Esophagus muscularis mucosa (tissue), 4 donors: ENCODE measurements at regions of chr22 and their contacts with region 1.

Region 1: GRCh38 chr22:38705235-38706100 is at the start of gene GTPBP1:
- DNase-seq: peak; percentile 100
- H3K4me3 ChIP-seq: peak within 1 kb of the TSS; percentile 82 to 100 (median 87)
- H3K27ac ChIP-seq: peak within 1 kb of the TSS; percentile 97 to 100 (median 98)
- H3K4me1 ChIP-seq: peaks cover 28 to 55% (median 45%) of the 10 kb centered on the region in 4 donors
- H3K27me3 ChIP-seq: no peaks in the 10 kb centered on the region
- CTCF ChIP-seq: peak in 2 of 3 experiments; percentile 12 to 17
- EP300 ChIP-seq: no peak
- POLR2A ChIP-seq: peak; percentile 91
- total RNA-seq, gene GTPBP1: 35.7 to 62.5 (median 50.6) TPM

Region 2: DNA sequence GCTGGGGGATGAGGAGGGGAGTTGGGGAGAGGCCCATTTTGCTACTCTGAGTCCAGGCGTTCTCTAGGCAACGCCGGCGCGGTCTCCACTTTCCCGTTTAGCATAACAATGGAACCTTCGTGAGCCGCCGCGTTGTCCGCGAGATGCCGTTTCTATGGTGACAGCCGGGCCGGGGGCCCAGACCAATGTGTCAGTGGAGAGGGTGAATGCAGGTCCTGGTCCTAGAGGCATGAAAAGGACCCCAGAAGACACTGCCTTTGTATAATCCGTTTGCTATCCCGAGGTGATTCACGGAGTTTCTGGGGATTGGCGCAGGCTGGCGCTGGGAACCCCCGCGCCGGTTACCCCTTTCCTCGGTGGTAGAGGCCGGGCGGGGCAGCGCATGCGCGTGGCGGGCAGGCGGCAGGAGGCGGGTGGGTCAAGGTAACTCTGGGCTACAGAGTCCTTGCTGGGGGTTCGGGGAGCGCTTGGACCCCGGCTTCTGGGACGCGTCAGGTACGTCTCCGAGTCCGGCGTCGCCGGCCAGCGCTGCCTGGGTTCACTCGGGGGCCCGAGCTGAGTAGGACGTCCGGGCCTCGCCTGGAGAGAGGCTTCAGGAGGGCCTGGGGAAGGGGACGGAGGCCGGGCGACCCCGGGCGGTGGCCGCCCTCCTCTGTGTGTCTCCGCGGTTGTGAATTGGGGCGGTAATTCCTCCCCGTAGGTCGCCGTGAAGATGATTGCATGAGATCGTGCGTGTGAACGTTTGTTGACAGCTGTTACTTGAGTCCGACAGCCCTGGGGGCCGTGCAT is 49.0 kb before region 1 on chr22 and contains the starts of genes CBY1 and FAM227A:
- intact Hi-C with region 1: no loop called
- DNase-seq: peak; percentile 97
- H3K4me3 ChIP-seq: peak within 1 kb of the TSS; percentile 83 to 96 (median 88)
- H3K27ac ChIP-seq: peak within 1 kb of the TSS; percentile 85 to 90 (median 89)
- H3K4me1 ChIP-seq: peaks cover 16 to 30% (median 22%) of the 10 kb centered on the region in 4 donors
- H3K27me3 ChIP-seq: no peaks in the 10 kb centered on the region
- CTCF ChIP-seq: no peak
- EP300 ChIP-seq: no peak
- POLR2A ChIP-seq: no peak
- total RNA-seq, gene CBY1: 25.2 to 36.9 (median 33.9) TPM
- total RNA-seq, gene FAM227A: 0.33 to 2.9 (median 0.86) TPM

Region 3: DNA sequence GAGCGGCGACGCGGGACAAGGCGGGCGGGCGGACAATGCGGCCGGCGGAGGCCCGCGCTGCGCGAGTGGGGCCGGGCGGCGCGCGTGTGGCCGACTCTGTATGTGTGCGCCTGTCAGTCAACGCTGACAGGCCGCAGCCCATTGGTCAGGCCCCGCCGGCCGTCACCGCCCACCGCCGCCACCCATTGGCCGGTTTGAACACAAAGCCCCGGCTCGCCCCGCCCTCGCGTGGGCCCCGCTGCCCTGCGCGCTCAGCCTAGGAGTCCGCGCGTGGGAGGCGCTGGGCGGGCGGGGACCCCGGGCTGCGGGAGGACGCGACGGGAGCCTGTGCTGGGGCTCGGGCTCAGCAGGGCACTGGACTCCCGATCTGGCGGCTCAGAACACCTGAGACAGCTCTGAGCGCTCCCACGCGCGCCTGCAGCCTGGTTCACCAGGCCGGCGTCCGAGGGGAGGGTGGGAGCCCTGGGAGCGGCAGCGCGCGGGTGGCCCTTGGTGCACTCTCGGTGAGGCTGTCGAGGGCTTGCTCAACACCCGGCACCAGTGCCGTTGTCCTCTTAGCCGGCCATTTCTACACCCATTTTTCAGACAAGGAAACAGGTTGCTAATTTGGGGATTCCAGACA is 50.6 kb after region 1 on chr22 and contains the start of gene SUN2:
- intact Hi-C with region 1: loop called (anchors 2 kb)
- DNase-seq: peak; percentile 99
- H3K4me3 ChIP-seq: peak within 1 kb of the TSS; percentile 70 to 82 (median 78)
- H3K27ac ChIP-seq: peak within 1 kb of the TSS; percentile 91 to 100 (median 98)
- H3K4me1 ChIP-seq: peaks cover 31 to 58% (median 50%) of the 10 kb centered on the region in 4 donors
- H3K27me3 ChIP-seq: no peaks in the 10 kb centered on the region
- CTCF ChIP-seq: no peak
- EP300 ChIP-seq: no peak
- POLR2A ChIP-seq: peak; percentile 67
- total RNA-seq, gene SUN2: 417 to 598 (median 449) TPM

Region 4: GRCh38 chr22:38843201-38843715 is 137.8 kb after region 1 on chr22:
- intact Hi-C with region 1: no loop called
- DNase-seq: no peak
- H3K4me3 ChIP-seq: peak overlapping the region; percentile 62 to 73 (median 65)
- H3K27ac ChIP-seq: peak overlapping the region; percentile 81 to 87 (median 82)
- H3K4me1 ChIP-seq: peaks cover 10 to 34% (median 27%) of the 10 kb centered on the region in 4 donors
- H3K27me3 ChIP-seq: no peaks in the 10 kb centered on the region
- CTCF ChIP-seq: peak; percentile 26 to 47 (median 42)
- EP300 ChIP-seq: no peak
- POLR2A ChIP-seq: no peak